ENCODE measurements at regions of chr11 and their contacts with region 1.

Region 1: GRCh38 chr11:119205574-119206510 is at the start of gene CBL:
- DNase-seq: peak; percentile 96
- H3K4me3 ChIP-seq: peak within 1 kb of the TSS; percentile 100
- H3K27ac ChIP-seq: peak within 1 kb of the TSS; percentile 90
- H3K4me1 ChIP-seq: peaks cover 8% of the 10 kb centered on the region
- H3K27me3 ChIP-seq: no peaks in the 10 kb centered on the region
- CTCF ChIP-seq: peak; percentile 98
- total RNA-seq, gene CBL: 39.9 and 40.7 TPM in 2 replicates

Region 2: DNA sequence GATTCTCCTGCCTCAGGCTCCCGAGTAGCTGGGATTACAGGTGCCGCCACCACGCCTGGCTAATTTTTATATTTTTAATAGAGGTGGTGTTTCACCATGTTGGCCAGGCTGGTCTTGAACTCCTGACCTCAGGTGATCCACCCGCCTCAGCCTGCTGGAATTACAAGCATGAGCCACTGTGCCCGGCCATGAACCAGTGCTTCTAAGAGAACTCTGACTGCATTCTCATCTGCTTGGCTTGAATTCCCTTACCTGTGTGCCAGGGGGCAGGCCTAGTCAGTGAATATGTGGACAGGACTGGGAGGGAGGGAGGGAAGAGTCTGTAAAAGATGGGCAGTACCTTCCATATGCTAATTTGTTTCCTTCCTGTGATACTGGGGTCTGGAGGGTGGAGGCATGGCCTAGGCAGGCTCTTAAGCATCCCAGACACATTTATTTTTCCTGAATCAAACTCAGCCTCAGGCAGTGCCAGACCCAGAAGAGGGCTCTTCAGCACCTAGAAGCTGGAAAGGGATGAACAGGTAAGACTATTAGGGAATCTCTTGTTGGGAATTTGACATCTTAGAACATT is 194.3 kb before region 1 on chr11:
- CTCF ChIA-PET with region 1: no interaction called
- POLR2A ChIA-PET with region 1: no interaction called
- intact Hi-C with region 1: no loop called
- DNase-seq: no peak
- H3K4me3 ChIP-seq: no peak overlapping the region
- H3K27ac ChIP-seq: no peak overlapping the region
- H3K4me1 ChIP-seq: peaks cover 4% of the 10 kb centered on the region
- H3K27me3 ChIP-seq: no peaks in the 10 kb centered on the region
- CTCF ChIP-seq: no peak

Region 3: DNA sequence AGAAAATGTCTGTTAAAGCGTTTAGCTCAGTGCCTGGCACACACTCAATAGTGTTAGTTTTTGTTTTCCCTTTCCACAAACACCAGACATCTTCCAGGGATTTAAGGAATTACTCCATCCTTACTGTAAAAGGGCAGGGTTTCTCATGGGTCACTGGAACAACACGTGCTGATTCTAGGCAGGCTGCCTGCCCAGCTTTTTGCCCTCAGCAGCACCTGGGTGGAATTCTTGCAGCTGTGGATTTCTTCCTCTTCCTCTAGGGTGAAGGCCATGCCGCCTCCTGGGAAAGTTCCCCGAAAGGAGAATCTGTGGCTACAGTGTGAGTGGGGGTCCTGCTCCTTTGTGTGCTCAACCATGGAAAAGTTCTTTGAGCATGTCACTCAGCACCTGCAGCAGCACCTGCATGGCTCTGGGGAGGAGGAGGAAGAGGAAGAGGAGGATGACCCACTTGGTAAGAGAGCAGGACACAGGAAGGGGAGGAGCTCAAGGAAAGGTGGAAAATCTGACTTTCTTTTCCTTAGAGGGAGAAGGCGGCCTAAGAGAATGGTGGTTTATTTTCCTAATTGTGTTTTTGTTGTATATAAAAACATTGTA is 79.1 kb before region 1 on chr11:
- CTCF ChIA-PET with region 1: no interaction called
- POLR2A ChIA-PET with region 1: no interaction called
- intact Hi-C with region 1: no loop called
- DNase-seq: no peak
- H3K4me3 ChIP-seq: no peak overlapping the region
- H3K27ac ChIP-seq: no peak overlapping the region
- H3K4me1 ChIP-seq: peaks cover 8% of the 10 kb centered on the region
- H3K27me3 ChIP-seq: no peaks in the 10 kb centered on the region
- CTCF ChIP-seq: no peak

Region 4: DNA sequence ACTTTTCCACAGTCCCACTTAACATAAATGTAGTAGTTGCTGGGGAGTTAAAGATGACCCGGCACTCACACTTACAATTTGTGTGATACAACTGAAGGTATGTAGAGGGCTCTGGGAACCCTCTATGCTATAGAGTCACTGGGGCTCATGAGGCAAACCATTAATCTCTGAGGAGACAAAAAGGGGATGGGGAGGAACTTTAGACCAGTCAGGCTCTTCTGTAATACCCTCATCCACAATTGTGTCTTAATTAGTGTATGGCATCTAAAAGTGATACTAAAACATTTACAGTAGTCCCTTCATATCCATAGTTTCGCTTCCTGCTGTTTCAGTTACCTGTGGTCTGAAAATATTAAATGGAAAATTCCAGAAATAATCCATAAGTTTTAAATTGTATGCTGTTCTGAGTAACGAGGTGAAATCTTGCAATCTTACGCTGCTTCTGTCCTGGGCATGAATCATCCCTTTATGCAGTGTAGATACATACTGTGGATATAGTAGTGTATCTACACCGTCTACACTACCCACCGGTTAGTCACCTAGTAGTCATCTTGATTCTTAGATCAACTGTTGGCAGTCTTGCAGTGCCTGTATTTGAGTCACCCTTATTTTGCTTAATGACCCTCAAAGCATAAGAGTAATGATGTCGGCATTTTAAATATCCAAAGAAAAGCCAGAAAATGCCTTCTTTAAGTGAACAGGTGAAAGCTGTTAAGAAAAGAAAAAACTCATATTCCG is 12.5 kb after region 1 on chr11:
- CTCF ChIA-PET with region 1: interaction called, 12 read pairs
- POLR2A ChIA-PET with region 1: no interaction called
- intact Hi-C with region 1: no loop called
- DNase-seq: peak; percentile 31
- H3K4me3 ChIP-seq: no peak overlapping the region
- H3K27ac ChIP-seq: no peak overlapping the region
- H3K4me1 ChIP-seq: no peaks in the 10 kb centered on the region
- H3K27me3 ChIP-seq: no peaks in the 10 kb centered on the region
- CTCF ChIP-seq: no peak

Region 5: GRCh38 chr11:119229288-119229672 is 23.4 kb after region 1 on chr11:
- CTCF ChIA-PET with region 1: no interaction called
- POLR2A ChIA-PET with region 1: no interaction called
- intact Hi-C with region 1: no loop called
- DNase-seq: no peak
- H3K4me3 ChIP-seq: no peak overlapping the region
- H3K27ac ChIP-seq: no peak overlapping the region
- H3K4me1 ChIP-seq: no peaks in the 10 kb centered on the region
- H3K27me3 ChIP-seq: no peaks in the 10 kb centered on the region
- CTCF ChIP-seq: no peak

Region 6: DNA sequence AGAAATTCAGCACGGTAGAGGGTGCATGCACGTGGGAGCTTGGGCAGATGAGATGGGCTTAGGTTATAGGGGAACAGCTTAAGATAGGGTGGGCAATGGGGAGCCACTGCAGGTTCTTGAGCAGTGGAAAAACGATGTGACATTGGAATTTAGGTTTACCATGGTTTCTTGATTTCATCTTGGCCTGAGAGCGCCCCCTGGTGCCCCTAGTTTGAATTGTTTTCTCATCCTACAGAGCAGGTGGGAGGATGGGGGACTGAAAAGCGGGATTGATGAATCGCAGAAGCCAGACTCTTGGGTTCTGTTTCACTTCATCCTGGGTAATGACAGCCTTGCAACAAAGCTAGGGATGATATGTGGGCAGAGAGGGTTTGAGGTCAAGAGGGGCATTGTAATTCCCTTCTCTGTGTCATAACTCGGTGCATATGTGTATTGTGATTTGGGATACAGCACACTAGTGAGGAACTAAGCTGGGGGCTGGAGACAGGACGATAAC is 117.7 kb after region 1 on chr11:
- CTCF ChIA-PET with region 1: interaction called, 3 read pairs
- POLR2A ChIA-PET with region 1: no interaction called
- intact Hi-C with region 1: loop called (anchors 5 kb)
- DNase-seq: peak; percentile 85
- H3K4me3 ChIP-seq: no peak overlapping the region
- H3K27ac ChIP-seq: no peak overlapping the region
- H3K4me1 ChIP-seq: peaks cover 12% of the 10 kb centered on the region
- H3K27me3 ChIP-seq: no peaks in the 10 kb centered on the region
- CTCF ChIP-seq: peak; percentile 93

Region 7: GRCh38 chr11:119373921-119374631 is 168.2 kb after region 1 on chr11:
- CTCF ChIA-PET with region 1: no interaction called
- POLR2A ChIA-PET with region 1: no interaction called
- intact Hi-C with region 1: no loop called
- DNase-seq: peak; percentile 89
- H3K4me3 ChIP-seq: no peak overlapping the region
- H3K27ac ChIP-seq: no peak overlapping the region
- H3K4me1 ChIP-seq: peaks cover 21% of the 10 kb centered on the region
- H3K27me3 ChIP-seq: no peaks in the 10 kb centered on the region
- CTCF ChIP-seq: peak; percentile 98